Vagina (tissue), 2 donors: ENCODE measurements at regions of chr7 and their contacts with region 1.

Region 1: GRCh38 chr7:48528646-48529045 is 357.4 kb downstream of the ABCA13 start:
- DNase-seq: no peak
- H3K4me3 ChIP-seq: no peak overlapping the region
- H3K27ac ChIP-seq: no peak overlapping the region
- H3K4me1 ChIP-seq: no peaks in the 10 kb centered on the region
- H3K27me3 ChIP-seq: no peaks in the 10 kb centered on the region
- CTCF ChIP-seq: no peak
- POLR2A ChIP-seq: no peak

Region 2: GRCh38 chr7:48424731-48425130 is 103.9 kb before region 1 on chr7:
- intact Hi-C with region 1: no loop called
- DNase-seq: no peak
- H3K4me3 ChIP-seq: no peak overlapping the region
- H3K27ac ChIP-seq: no peak overlapping the region
- H3K4me1 ChIP-seq: no peaks in the 10 kb centered on the region
- H3K27me3 ChIP-seq: no peaks in the 10 kb centered on the region
- CTCF ChIP-seq: no peak
- POLR2A ChIP-seq: no peak

Region 3: GRCh38 chr7:49371771-49372170 is 843.1 kb after region 1 on chr7:
- intact Hi-C with region 1: loop called (anchors 5 kb)
- DNase-seq: no peak
- H3K4me3 ChIP-seq: no peak overlapping the region
- H3K27ac ChIP-seq: no peak overlapping the region
- H3K4me1 ChIP-seq: no peaks in the 10 kb centered on the region
- H3K27me3 ChIP-seq: no peaks in the 10 kb centered on the region
- CTCF ChIP-seq: no peak
- POLR2A ChIP-seq: no peak